ENCODE measurements at regions of chr17 and their contacts with region 1.

Region 1: DNA sequence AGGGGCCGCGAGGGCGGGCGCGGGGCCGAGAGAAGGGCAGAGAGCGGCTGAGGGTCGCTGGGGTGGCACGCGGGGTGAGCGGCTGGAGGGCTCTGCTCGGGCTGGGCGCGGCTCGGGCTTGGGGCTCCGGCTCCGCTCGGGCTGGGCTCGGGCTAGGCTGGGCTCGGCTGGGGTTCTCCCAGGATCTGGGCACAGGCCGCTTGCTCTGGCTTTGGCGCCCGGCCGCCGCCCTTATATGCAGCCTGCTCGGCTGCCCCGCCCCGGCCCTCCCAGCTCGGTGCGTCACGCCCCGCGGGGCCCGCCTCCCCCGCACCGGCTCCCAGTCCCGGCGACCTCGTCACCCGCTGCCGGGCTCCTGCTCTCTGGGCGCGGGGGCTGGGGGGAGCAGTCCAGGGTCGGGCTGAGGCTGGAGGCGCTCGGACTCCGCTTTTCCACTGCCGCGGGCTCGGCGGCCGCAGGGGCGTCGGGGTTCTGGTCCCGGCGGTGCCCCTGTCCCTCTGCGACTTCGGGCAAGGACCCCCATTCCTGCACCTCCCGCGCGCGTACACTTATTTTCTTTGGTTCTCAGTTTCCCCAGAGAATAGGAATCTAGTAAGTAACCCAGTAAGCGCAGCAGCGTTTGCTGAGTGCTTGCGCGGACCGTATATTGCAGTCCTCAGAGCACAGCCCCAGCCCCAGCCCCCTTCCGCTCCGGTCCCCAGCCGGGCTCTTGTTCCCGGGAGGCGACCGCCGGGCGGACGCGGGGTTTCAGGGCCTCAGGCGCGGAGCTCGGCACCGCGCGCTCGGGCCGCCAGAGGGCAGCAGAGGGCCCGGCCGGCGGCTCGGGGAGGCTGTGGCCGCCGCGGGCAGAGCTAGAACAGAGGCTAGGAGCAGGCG is at the start of gene RASD1:
- DNase-seq: peak; percentile 81
- ATAC-seq: peak; percentile 93
- H3K4me3 ChIP-seq: peak within 1 kb of the TSS; percentile 63
- H3K27ac ChIP-seq: peak within 1 kb of the TSS; percentile 6; the same call in 1 of the 2 replicates
- H3K4me1 ChIP-seq: peaks cover 7% of the 10 kb centered on the region; the same call in 1 of the 2 replicates
- H3K27me3 ChIP-seq: peaks cover 3% of the 10 kb centered on the region; the same call in 1 of the 2 replicates
- CTCF ChIP-seq: peak; percentile 94
- POLR2A ChIP-seq: peak; percentile 98
- RAD21 ChIP-seq: peak; percentile 82
- total RNA-seq, gene RASD1: 0.54 and 1.1 TPM in 2 replicates

Region 2: GRCh38 chr17:17216776-17217175 is 279.7 kb before region 1 on chr17:
- CTCF ChIA-PET with region 1: no interaction called
- POLR2A ChIA-PET with region 1: no interaction called
- dilution Hi-C with region 1: no loop called
- in situ Hi-C with region 1: no loop called
- intact Hi-C with region 1: no loop called
- DNase-seq: no peak
- ATAC-seq: no peak
- H3K4me3 ChIP-seq: no peak overlapping the region
- H3K27ac ChIP-seq: no peak overlapping the region
- H3K4me1 ChIP-seq: no peaks in the 10 kb centered on the region
- H3K27me3 ChIP-seq: no peaks in the 10 kb centered on the region
- CTCF ChIP-seq: no peak
- POLR2A ChIP-seq: no peak
- RAD21 ChIP-seq: no peak

Region 3: DNA sequence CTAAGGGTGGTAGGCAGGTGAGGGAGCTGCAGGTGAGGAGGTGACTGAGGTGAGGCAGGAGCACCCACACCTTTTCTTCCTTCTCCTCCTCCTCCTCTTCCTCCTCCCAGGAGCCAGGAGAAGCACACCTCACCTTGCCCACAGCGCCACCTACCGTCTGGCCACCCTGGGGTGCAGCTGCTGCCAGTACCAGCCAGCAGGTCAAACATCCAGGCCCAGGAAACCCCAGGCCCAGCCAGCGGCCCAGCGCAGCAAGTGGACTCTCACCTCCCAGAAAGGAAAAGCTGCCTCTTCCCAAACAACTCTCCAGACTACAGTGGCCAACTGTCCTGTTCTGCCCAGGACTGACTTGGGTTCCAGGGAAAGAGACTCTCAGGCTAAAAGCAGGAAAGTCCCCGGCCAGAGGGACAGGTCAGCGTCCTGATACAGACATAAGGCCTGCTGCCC is 72.3 kb after region 1 on chr17:
- CTCF ChIA-PET with region 1: interaction called, 13 read pairs
- POLR2A ChIA-PET with region 1: interaction called, 6 read pairs
- dilution Hi-C with region 1: no loop called
- in situ Hi-C with region 1: loop called (anchors 5 kb)
- intact Hi-C with region 1: loop called (anchors 1 kb)
- DNase-seq: peak; percentile 36
- ATAC-seq: peak; percentile 62
- H3K4me3 ChIP-seq: no peak overlapping the region
- H3K27ac ChIP-seq: no peak overlapping the region
- H3K4me1 ChIP-seq: peaks cover 2% of the 10 kb centered on the region; the same call in 1 of the 2 replicates
- H3K27me3 ChIP-seq: no peaks in the 10 kb centered on the region
- CTCF ChIP-seq: peak; percentile 74
- POLR2A ChIP-seq: no peak
- RAD21 ChIP-seq: peak; percentile 83

Region 4: GRCh38 chr17:17613708-17614114 is 117.3 kb after region 1 on chr17:
- CTCF ChIA-PET with region 1: interaction called, 8 read pairs
- POLR2A ChIA-PET with region 1: interaction called, 3 read pairs
- dilution Hi-C with region 1: no loop called
- in situ Hi-C with region 1: no loop called
- intact Hi-C with region 1: loop called (anchors 5 kb)
- DNase-seq: peak; percentile 73
- ATAC-seq: peak; percentile 100
- H3K4me3 ChIP-seq: no peak overlapping the region
- H3K27ac ChIP-seq: no peak overlapping the region
- H3K4me1 ChIP-seq: no peaks in the 10 kb centered on the region; the same call in 1 of the 2 replicates
- H3K27me3 ChIP-seq: peaks cover 4% of the 10 kb centered on the region; the same call in 1 of the 2 replicates
- CTCF ChIP-seq: peak; percentile 72
- POLR2A ChIP-seq: no peak
- RAD21 ChIP-seq: peak; percentile 73

Region 5: GRCh38 chr17:17641621-17642409 is 145.4 kb after region 1 on chr17:
- CTCF ChIA-PET with region 1: interaction called, 7 read pairs
- POLR2A ChIA-PET with region 1: no interaction called
- dilution Hi-C with region 1: no loop called
- in situ Hi-C with region 1: loop called (anchors 5 kb)
- intact Hi-C with region 1: loop called (anchors 1 kb)
- DNase-seq: peak; percentile 76
- ATAC-seq: peak; percentile 99
- H3K4me3 ChIP-seq: no peak overlapping the region
- H3K27ac ChIP-seq: no peak overlapping the region
- H3K4me1 ChIP-seq: no peaks in the 10 kb centered on the region
- H3K27me3 ChIP-seq: peaks cover 6% of the 10 kb centered on the region
- CTCF ChIP-seq: peak; percentile 96
- POLR2A ChIP-seq: no peak
- RAD21 ChIP-seq: peak; percentile 96

Region 6: DNA sequence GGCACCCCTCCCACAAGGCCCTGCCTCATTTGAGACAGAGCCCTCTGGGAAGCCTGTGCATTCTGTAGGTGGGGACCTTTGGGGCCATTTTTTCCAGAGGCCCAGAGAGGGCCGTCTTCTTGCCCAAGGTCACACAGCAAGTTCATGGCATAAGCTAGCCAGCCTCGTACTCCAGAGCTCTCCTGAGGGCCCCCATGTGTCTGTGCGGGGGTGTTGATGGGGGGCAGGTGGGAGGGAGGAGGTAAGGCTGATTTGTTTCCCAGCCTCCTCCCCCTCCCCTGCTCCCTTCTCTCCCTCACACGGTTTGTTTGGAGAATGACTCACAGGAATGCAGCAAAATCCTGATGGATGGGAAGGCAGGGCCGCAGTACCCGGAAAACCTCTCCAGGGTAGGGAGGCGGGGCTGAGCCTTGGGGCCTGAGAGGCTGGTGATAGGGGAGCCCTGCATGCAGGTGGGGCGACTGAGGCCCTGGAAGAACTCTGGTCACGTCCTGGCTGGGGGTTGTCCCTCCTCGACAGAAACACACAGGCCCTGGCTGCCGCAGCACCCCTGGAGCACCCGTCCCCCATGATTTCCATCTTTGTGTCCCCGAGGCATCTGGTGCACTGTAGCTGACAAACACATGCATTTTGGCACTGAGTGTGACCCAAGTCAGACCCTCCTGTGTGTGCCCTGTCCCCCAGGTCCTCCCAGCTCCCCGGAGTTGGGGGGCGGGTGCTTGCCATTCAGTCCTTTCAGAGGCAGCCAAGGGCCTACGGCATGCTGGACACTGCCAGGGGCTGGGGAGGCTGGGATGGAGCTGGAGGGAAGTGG is 214.5 kb after region 1 on chr17:
- CTCF ChIA-PET with region 1: no interaction called
- POLR2A ChIA-PET with region 1: no interaction called
- dilution Hi-C with region 1: no loop called
- in situ Hi-C with region 1: no loop called
- intact Hi-C with region 1: no loop called
- DNase-seq: peak; percentile 93
- ATAC-seq: peak; percentile 74
- H3K4me3 ChIP-seq: no peak overlapping the region
- H3K27ac ChIP-seq: peak overlapping the region; percentile 80
- H3K4me1 ChIP-seq: peaks cover 63% of the 10 kb centered on the region
- H3K27me3 ChIP-seq: no peaks in the 10 kb centered on the region
- CTCF ChIP-seq: no peak
- POLR2A ChIP-seq: no peak
- RAD21 ChIP-seq: no peak